Right cardiac atrium (tissue), 5 donors: ENCODE measurements at regions of chr18 and their contacts with region 1.

Region 1: DNA sequence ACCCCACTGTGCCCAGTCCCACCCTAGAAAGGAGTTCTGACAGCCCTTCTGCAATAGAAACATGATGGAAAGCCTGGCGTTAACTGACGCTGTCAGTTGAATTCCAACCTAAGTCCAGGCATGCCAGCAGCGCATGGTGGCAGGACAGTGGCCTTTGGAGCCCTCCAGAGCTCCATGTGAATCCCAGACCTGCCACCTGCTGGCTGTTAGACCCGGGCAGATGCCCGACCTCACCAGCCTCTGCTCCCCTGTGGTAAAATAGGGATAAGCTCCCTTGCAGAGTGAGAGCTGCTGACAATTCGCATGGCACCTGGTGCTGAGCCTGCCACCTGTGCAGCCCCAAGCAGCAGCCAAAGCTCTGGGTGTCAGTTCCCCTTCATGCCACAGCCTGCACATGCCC is 138.6 kb downstream of the LOXHD1 start:
- DNase-seq: peak in 2 of 3 donors; percentile 66 to 74
- ATAC-seq: peak; percentile 75 to 83
- H3K4me3 ChIP-seq: no peak overlapping the region
- H3K27ac ChIP-seq: no peak overlapping the region
- H3K4me1 ChIP-seq: no peaks in the 10 kb centered on the region
- H3K27me3 ChIP-seq: no peaks in the 10 kb centered on the region

Region 2: DNA sequence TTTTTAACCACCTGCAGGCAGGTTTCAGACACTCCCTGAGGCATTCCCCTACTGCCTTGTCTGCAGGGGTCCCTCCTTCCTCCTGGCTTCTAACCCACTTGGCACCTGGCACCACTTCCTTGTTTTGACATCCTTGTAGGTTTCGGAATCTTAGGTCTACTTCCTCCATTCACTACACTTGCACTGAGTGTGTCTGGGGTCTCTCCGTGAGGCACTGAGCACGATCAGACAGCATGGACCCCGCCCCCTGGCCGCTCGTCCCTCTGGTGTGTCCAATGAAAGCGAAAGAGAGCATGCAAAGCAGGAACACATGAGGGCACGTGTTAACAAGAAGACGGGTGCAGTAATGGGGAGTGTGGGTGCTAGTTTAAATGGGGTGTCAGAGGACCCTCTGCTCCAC is 350.5 kb before region 1 on chr18:
- intact Hi-C with region 1: loop called in 2 of 4 experiments (anchors 10 kb)
- DNase-seq: no peak
- ATAC-seq: no peak
- H3K4me3 ChIP-seq: no peak overlapping the region
- H3K27ac ChIP-seq: no peak overlapping the region
- H3K4me1 ChIP-seq: no peaks in the 10 kb centered on the region
- H3K27me3 ChIP-seq: no peaks in the 10 kb centered on the region

Region 3: GRCh38 chr18:46281185-46282176 is 237.0 kb before region 1 on chr18:
- intact Hi-C with region 1: loop called in 2 of 4 experiments (anchors 5 kb)
- DNase-seq: peak; percentile 66 to 87 (median 85)
- ATAC-seq: peak; percentile 82 to 87
- H3K4me3 ChIP-seq: no peak overlapping the region
- H3K27ac ChIP-seq: no peak overlapping the region
- H3K4me1 ChIP-seq: peaks cover 8% of the 10 kb centered on the region
- H3K27me3 ChIP-seq: no peaks in the 10 kb centered on the region

Region 4: GRCh38 chr18:46711444-46711863 is 193.0 kb after region 1 on chr18:
- intact Hi-C with region 1: no loop called
- DNase-seq: no peak
- ATAC-seq: peak; percentile 41 to 61
- H3K4me3 ChIP-seq: no peak overlapping the region
- H3K27ac ChIP-seq: peak overlapping the region; percentile 88
- H3K4me1 ChIP-seq: peaks cover 3% of the 10 kb centered on the region
- H3K27me3 ChIP-seq: no peaks in the 10 kb centered on the region